CD8-positive, alpha-beta memory T cell (primary cell): ENCODE measurements at regions of chr20 and their contacts with region 1.

Region 1: GRCh38 chr20:33005132-33005566 is 916 bp upstream of the SUN5 start:
- DNase-seq: peak in 2 of 5 donors; percentile 21 to 39
- H3K4me3 ChIP-seq: no peak overlapping the region
- H3K4me3 Mint-ChIP-seq: no peak overlapping the region
- H3K27ac ChIP-seq: no peak overlapping the region
- H3K27ac Mint-ChIP-seq: no peak overlapping the region
- H3K4me1 ChIP-seq: peaks cover 11% of the 10 kb centered on the region
- H3K4me1 Mint-ChIP-seq: peaks cover 3 to 14% (median 14%) of the 10 kb centered on the region in 3 donors
- H3K27me3 ChIP-seq: no peaks in the 10 kb centered on the region
- H3K27me3 Mint-ChIP-seq: no peaks in the 10 kb centered on the region

Region 2: DNA sequence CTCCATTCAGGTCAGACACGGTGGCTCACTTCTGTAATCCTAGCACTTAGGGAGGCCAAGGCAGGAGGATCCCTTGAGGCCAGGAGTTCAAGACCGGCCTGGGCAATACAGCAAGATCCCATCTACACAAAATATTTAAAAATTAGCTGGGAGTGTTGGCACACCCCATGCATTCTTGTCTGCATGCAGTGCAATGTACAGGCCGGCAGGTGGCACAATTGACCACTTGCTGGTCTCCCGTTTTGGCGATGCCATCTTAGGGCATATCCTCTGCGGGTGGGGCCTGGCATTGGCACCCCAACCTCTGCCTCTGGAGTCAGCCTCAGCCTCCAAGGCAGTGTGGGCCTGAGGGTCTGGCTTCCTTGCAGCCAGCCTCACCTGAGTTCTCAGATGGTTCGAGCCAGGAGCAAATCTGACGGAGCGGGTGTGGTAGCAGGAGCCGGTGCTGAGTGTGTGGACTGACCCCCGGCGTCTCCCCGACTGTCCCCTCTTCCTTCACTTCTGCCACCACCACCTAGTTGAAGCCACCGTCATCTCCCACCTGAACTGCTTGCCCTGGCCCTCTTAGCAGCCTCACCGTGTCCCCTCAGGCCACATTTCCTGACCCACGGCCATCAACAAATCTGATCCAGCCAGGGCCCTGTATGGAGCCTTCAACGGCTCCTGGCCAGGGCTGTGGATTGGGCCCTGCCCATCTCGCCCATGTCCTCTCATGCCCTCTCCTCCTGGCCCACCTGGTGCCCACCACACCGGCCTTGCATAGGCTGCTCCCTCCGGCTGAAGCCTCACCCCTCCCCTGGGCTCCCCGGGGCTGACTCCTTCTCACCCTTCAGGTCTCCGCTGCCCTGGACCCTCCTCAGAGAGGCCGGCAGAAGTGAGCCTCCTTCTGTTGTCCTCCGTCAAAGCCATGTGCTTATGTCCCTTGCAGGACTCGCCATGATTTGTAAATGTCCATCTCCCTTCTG is 102.4 kb before region 1 on chr20:
- CTCF ChIA-PET with region 1: interaction called, 10 read pairs
- POLR2A ChIA-PET with region 1: no interaction called
- DNase-seq: peak; percentile 54 to 81 (median 57)
- H3K4me3 ChIP-seq: no peak overlapping the region
- H3K4me3 Mint-ChIP-seq: no peak overlapping the region
- H3K27ac ChIP-seq: no peak overlapping the region
- H3K27ac Mint-ChIP-seq: peak overlapping the region in 6 of 8 donors; percentile 27 to 71 (median 61)
- H3K4me1 ChIP-seq: peaks cover 23% of the 10 kb centered on the region
- H3K4me1 Mint-ChIP-seq: peaks cover 7 to 20% (median 14%) of the 10 kb centered on the region in 3 donors
- H3K27me3 ChIP-seq: no peaks in the 10 kb centered on the region
- H3K27me3 Mint-ChIP-seq: no peaks in the 10 kb centered on the region